ENCODE measurements at regions of chr14 and their contacts with region 1.

Region 1: GRCh38 chr14:90697577-90698206 is 118.5 kb downstream of the TTC7B start:
- DNase-seq: peak; percentile 85
- H3K4me3 Mint-ChIP-seq: no peak overlapping the region
- H3K27ac Mint-ChIP-seq: no peak overlapping the region
- H3K4me1 Mint-ChIP-seq: no peaks in the 10 kb centered on the region
- H3K27me3 Mint-ChIP-seq: no peaks in the 10 kb centered on the region
- CTCF ChIP-seq: peak; percentile 94

Region 2: GRCh38 chr14:89978656-89979055 is 719.0 kb before region 1 on chr14:
- CTCF ChIA-PET with region 1: no interaction called
- POLR2A ChIA-PET with region 1: no interaction called
- intact Hi-C with region 1: no loop called
- DNase-seq: no peak
- H3K4me3 Mint-ChIP-seq: no peak overlapping the region
- H3K27ac Mint-ChIP-seq: no peak overlapping the region
- H3K4me1 Mint-ChIP-seq: no peaks in the 10 kb centered on the region
- H3K27me3 Mint-ChIP-seq: no peaks in the 10 kb centered on the region
- CTCF ChIP-seq: no peak

Region 3: GRCh38 chr14:90301668-90302090 is 396.0 kb before region 1 on chr14:
- CTCF ChIA-PET with region 1: interaction called, 37 read pairs
- POLR2A ChIA-PET with region 1: interaction called, 3 read pairs
- intact Hi-C with region 1: loop called (anchors 1 kb)
- DNase-seq: peak; percentile 41
- H3K4me3 Mint-ChIP-seq: no peak overlapping the region
- H3K27ac Mint-ChIP-seq: peak overlapping the region; percentile 63
- H3K4me1 Mint-ChIP-seq: no peaks in the 10 kb centered on the region
- H3K27me3 Mint-ChIP-seq: no peaks in the 10 kb centered on the region
- CTCF ChIP-seq: peak; percentile 23

Region 4: GRCh38 chr14:90399541-90400444 is 297.9 kb before region 1 on chr14:
- CTCF ChIA-PET with region 1: interaction called, 158 read pairs
- POLR2A ChIA-PET with region 1: interaction called, 26 read pairs
- intact Hi-C with region 1: loop called (anchors 1 kb)
- DNase-seq: peak; percentile 91
- H3K4me3 Mint-ChIP-seq: peak overlapping the region; percentile 29
- H3K27ac Mint-ChIP-seq: no peak overlapping the region
- H3K4me1 Mint-ChIP-seq: peaks cover 10% of the 10 kb centered on the region
- H3K27me3 Mint-ChIP-seq: no peaks in the 10 kb centered on the region
- CTCF ChIP-seq: peak; percentile 99

Region 5: GRCh38 chr14:90663140-90663539 is 34.6 kb before region 1 on chr14:
- CTCF ChIA-PET with region 1: no interaction called
- POLR2A ChIA-PET with region 1: no interaction called
- intact Hi-C with region 1: no loop called
- DNase-seq: no peak
- H3K4me3 Mint-ChIP-seq: no peak overlapping the region
- H3K27ac Mint-ChIP-seq: no peak overlapping the region
- H3K4me1 Mint-ChIP-seq: no peaks in the 10 kb centered on the region
- H3K27me3 Mint-ChIP-seq: no peaks in the 10 kb centered on the region
- CTCF ChIP-seq: no peak

Region 6: GRCh38 chr14:90714811-90715210 is 17.1 kb after region 1 on chr14:
- CTCF ChIA-PET with region 1: interaction called, 17 read pairs
- POLR2A ChIA-PET with region 1: interaction called, 3 read pairs
- intact Hi-C with region 1: no loop called
- DNase-seq: no peak
- H3K4me3 Mint-ChIP-seq: no peak overlapping the region
- H3K27ac Mint-ChIP-seq: peak overlapping the region; percentile 85
- H3K4me1 Mint-ChIP-seq: no peaks in the 10 kb centered on the region
- H3K27me3 Mint-ChIP-seq: no peaks in the 10 kb centered on the region
- CTCF ChIP-seq: no peak

Region 7: DNA sequence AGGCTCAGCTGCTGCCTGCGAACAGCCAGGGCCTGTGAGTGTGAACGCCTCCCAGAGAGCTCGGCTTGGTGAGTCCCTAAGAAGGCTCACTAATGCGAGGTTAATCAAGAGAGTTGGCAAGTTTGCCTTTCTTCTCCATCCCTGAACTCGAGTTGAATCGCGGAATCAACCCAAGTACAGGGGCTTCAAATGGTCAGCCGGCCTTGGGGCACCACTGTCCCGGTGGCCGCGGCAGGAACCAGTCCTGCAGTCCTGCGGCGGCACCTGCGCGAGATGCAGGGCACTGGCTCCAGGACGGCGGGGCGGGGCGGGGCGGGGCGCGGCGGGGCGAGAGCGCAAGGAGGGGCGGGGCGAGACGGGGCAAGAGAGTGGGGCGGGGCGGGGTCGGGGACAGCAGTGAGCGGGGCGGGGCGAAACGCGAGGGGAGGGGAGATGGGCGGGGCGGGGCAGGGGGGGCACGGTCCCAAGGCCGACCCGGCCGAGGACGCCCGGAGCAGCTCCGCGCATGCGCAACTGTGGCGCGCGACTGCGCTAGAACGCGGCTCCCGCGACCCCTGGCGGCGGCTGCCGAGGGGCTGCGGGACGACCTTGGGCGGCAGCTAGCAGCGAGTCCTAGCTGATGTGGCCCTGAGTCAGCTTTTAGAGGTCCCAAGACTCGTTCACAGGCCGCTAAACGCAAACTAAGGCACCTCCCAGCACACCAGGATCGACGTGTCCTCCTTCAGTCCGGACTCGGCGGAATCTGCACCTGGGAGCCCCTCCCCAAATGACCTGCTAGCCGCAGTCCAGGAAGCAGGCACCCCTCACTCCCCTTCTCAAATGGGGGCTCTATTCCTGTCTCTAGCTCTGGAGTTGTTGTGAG is 60.6 kb after region 1 on chr14:
- CTCF ChIA-PET with region 1: interaction called, 13 read pairs
- POLR2A ChIA-PET with region 1: no interaction called
- intact Hi-C with region 1: no loop called
- DNase-seq: peak; percentile 87
- H3K4me3 Mint-ChIP-seq: peak overlapping the region; percentile 72
- H3K27ac Mint-ChIP-seq: no peak overlapping the region
- H3K4me1 Mint-ChIP-seq: no peaks in the 10 kb centered on the region
- H3K27me3 Mint-ChIP-seq: no peaks in the 10 kb centered on the region
- CTCF ChIP-seq: peak; percentile 75

Region 8: GRCh38 chr14:90785471-90785870 is 87.8 kb after region 1 on chr14:
- CTCF ChIA-PET with region 1: no interaction called
- POLR2A ChIA-PET with region 1: no interaction called
- intact Hi-C with region 1: no loop called
- DNase-seq: peak; percentile 45
- H3K4me3 Mint-ChIP-seq: no peak overlapping the region
- H3K27ac Mint-ChIP-seq: no peak overlapping the region
- H3K4me1 Mint-ChIP-seq: peaks cover 14% of the 10 kb centered on the region
- H3K27me3 Mint-ChIP-seq: no peaks in the 10 kb centered on the region
- CTCF ChIP-seq: no peak